Activated naive CD4-positive, alpha-beta T cell treated with anti-CD3 and anti-CD28 coated beads for 36 hours (primary cell): ENCODE measurements at regions of chr7 and their contacts with region 1.

Region 1: DNA sequence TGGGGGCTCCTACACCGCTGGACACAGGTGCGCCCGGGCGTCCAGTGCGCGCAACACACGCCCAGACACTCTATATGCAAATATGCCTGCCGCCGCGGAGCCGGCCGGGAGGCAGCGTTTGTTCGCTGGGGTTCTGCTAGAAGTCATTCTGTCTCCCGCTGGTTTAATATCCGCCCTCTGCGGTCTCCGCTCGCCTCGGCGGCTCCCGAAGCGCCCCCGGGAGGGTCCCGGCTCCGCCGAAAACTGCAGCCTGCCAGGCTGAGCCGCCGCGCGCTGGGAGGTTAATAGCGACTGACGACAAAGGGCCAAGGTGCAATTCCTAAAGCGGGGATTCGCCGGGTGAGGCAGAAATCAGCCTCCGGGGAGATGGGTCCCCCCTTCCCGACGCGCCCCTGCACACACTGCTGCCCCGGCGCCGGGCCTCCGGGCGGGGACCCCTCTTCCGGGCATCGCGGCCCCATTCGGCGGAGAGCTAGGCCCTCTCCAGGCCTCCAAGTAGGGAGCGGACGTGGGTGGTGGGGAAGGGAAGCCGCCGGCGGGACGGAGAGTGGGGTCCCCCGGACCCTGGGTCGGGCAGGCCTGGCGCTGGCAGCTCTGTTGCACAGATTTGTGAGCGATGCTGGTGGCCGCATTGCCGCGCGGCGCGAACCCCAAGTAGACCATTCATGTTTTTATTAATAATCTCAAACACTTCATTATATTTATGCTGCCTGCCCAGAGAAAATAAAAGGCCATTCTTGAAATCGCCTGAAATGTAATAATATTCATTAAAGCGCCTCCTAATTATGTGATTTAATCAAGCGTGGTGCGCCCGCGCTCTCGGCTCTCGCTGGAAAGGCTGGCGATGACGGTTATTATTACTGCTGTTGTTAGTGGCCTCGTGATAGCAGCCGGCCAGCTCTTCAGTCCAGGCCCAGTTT is 9.1 kb downstream of the EN2 start:
- DNase-seq: peak; percentile 61
- H3K4me3 Mint-ChIP-seq: no peak overlapping the region
- H3K27ac Mint-ChIP-seq: no peak overlapping the region
- H3K4me1 Mint-ChIP-seq: peaks cover 21% of the 10 kb centered on the region
- H3K27me3 Mint-ChIP-seq: peaks cover 80% of the 10 kb centered on the region

Region 2: GRCh38 chr7:155448632-155449007 is 18.5 kb before region 1 on chr7:
- CTCF ChIA-PET with region 1: no interaction called
- intact Hi-C with region 1: loop called (anchors 1 kb)
- DNase-seq: no peak
- H3K4me3 Mint-ChIP-seq: no peak overlapping the region
- H3K27ac Mint-ChIP-seq: no peak overlapping the region
- H3K4me1 Mint-ChIP-seq: peaks cover 10% of the 10 kb centered on the region
- H3K27me3 Mint-ChIP-seq: peaks cover 56% of the 10 kb centered on the region

Region 3: DNA sequence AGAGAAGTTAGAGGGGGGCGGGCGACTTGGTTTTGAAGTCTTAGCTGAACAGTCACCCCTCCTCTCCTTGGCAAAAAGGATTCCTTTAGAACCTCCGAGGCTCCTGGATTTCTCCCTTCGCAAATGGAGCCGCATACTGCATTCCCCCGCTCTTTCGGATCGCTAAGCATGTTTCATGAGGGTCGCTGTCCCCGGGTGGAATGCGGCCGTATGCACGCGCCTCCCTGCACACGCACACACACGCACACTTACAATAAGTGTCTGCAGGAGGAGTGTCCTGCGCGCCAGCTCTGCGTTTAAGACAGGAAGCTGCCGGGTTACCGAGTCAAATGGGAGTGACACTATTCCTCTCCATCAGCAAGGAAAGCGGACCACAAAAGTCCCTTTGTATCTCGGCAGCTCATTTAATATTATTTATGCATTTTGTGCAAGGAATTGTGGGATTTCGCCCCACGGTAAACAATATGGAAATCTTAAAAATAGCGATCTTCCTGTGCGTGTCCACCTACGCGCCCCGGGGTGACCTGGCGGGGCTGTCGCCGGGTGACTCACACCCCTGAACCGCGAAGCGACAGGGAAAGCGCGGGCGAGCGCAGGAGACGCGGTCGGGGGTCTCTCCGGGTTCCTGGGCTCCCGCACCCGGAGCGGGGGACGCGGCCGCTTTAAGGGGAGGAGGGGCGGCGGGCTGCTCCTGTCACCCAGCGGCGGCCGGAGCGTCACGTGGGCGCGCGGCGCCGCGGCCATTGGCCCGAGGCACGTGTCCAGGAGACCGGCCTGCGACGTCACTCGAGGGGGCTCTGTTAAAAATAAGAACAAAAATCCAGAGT is 10.1 kb before region 1 on chr7:
- CTCF ChIA-PET with region 1: no interaction called
- intact Hi-C with region 1: loop called (anchors 1 kb)
- DNase-seq: peak; percentile 45
- H3K4me3 Mint-ChIP-seq: peak overlapping the region; percentile 63
- H3K27ac Mint-ChIP-seq: peak overlapping the region; percentile 18
- H3K4me1 Mint-ChIP-seq: peaks cover 22% of the 10 kb centered on the region
- H3K27me3 Mint-ChIP-seq: peaks cover 75% of the 10 kb centered on the region

Region 4: DNA sequence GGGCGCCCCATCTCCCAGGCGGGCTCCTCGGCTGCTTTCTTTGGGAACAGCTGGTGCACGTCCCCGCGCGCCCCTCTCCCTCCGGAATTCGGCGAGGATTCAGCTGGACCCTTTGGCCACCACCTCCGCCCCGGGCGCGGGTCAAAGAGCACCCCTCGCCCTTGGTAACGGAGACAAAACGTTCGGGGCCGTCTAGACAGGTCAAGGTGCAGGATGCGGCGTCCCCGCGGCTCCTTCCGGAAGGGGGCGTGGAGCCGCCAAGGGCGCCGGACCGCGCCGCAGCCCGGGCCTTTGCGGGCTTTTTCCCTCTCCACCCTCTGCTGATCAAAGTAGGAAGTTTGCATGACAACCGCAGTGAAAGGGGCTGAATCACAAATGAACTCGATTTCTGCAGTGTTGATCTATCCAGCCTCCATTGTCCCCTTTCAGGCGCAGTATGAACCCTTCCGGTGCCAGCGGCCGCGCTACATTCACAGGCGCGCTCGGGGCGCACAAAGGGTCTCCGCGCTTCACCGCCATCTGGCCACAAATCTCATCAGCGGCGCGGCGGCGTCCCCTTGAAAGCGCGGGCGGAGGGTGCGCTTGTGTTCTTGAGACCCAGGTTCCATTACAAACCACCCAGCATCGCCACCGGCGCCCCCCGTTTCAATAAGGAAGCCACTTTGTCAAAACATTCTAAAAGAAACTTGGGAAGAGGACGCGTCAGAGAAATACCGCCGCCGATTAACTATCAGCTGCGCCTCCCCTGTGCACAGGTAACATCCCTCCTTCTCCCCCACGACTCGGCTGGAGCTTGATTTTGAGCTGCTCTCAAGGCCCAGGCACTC is 42.9 kb after region 1 on chr7:
- CTCF ChIA-PET with region 1: interaction called, 4 read pairs
- intact Hi-C with region 1: loop called (anchors 2 kb)
- DNase-seq: no peak
- H3K4me3 Mint-ChIP-seq: peak overlapping the region; percentile 54
- H3K27ac Mint-ChIP-seq: no peak overlapping the region
- H3K4me1 Mint-ChIP-seq: peaks cover 18% of the 10 kb centered on the region
- H3K27me3 Mint-ChIP-seq: peaks cover 73% of the 10 kb centered on the region

Region 5: DNA sequence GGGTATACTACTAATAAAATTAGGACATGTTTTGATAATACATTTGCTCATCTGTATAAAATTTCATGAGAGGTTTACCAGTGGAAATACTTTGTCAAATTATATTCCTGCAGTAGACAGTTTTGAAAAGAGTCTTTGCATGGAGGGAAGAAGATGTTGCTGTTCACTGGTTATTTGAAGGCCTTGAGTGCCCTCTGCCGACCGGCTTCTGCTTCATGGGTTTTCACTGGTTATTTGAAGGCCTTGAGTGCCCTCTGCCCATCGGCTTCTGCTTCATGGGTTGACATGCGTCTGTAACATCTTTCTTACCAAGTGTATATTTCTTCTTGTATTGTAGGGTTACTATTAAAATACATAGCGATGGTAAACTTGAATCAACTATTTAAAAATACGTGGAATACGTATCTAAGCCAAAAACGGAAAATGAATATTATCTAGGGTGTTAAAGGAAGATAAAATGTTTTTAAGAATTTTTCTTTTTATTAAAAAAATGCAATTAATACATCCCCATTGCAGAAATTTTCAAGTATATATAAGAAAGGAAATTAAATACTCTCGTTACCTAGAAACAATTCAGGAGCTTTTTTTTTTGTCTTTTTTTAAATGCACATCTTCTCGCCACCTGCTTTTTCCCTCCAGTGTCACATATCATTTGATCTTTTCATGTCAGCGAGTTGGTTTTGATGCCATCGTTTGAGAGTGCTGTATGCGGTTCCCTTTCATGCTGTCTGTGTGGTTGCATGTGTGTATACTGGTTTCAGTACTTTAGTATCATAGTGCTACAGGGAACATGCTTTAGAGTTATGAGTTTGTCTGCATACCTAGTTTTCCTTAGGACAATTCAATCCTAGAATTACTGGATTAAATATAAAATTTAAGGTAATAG is 271.8 kb after region 1 on chr7:
- CTCF ChIA-PET with region 1: interaction called, 3 read pairs
- intact Hi-C with region 1: loop called (anchors 10 kb)
- DNase-seq: peak; percentile 87
- H3K4me3 Mint-ChIP-seq: no peak overlapping the region
- H3K27ac Mint-ChIP-seq: no peak overlapping the region
- H3K4me1 Mint-ChIP-seq: peaks cover 47% of the 10 kb centered on the region
- H3K27me3 Mint-ChIP-seq: no peaks in the 10 kb centered on the region

Region 6: GRCh38 chr7:155787171-155787851 is 320.2 kb after region 1 on chr7:
- CTCF ChIA-PET with region 1: no interaction called
- intact Hi-C with region 1: no loop called
- DNase-seq: no peak
- H3K4me3 Mint-ChIP-seq: no peak overlapping the region
- H3K27ac Mint-ChIP-seq: no peak overlapping the region
- H3K4me1 Mint-ChIP-seq: peaks cover 9% of the 10 kb centered on the region
- H3K27me3 Mint-ChIP-seq: peaks cover 12% of the 10 kb centered on the region

Region 7: DNA sequence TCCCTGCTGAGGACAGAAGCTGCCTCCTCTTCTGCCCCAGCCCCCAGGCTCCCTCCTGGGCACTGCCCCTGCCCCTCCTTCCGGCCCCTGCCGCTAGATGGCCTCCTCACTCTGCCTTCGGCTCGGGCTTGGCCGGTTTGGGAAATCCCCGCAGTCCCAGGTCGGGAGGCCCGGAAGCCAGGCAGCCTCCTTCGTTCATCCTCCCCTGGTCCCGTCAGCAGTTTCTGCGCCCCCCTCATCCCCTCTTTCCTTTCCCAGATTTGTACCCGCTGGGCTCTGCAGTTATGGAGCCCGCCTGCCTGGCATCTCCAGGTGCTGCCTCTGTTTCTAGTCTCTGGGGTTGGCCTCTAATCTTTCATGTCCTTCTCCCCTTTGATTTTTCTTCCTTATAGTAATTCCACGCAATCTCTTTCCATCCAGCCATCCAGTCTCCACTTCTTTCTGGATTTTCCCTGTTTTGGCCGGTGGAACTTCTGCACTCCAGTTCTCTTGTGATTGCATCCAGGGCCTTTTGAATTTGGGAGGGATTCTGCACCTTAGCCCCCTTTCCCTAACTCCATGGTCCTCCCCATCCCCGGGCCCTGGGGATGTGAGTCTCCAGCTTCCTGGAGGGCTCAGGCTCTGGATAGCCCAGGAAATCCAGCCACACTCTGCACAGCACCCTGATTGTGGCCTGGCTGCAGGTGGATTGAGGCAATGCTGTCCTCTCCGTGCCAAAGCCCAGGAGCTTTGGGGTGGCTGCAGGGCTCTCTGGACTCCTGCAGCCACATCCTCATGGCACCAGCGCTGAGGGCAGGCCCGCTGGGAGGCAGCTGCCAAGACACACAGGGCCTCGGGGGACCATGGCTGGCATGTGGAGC is 348.5 kb after region 1 on chr7:
- CTCF ChIA-PET with region 1: no interaction called
- intact Hi-C with region 1: loop called (anchors 5 kb)
- DNase-seq: peak; percentile 87
- H3K4me3 Mint-ChIP-seq: no peak overlapping the region
- H3K27ac Mint-ChIP-seq: no peak overlapping the region
- H3K4me1 Mint-ChIP-seq: peaks cover 17% of the 10 kb centered on the region
- H3K27me3 Mint-ChIP-seq: peaks cover 41% of the 10 kb centered on the region

Region 8: GRCh38 chr7:157010588-157011332 is 1543.7 kb after region 1 on chr7 and contains the start of gene MNX1:
- CTCF ChIA-PET with region 1: no interaction called
- intact Hi-C with region 1: loop called (anchors 5 kb)
- DNase-seq: peak; percentile 51
- H3K4me3 Mint-ChIP-seq: peak within 1 kb of the TSS; percentile 46
- H3K27ac Mint-ChIP-seq: no peak within 1 kb of the TSS
- H3K4me1 Mint-ChIP-seq: peaks cover 12% of the 10 kb centered on the region
- H3K27me3 Mint-ChIP-seq: peaks cover 82% of the 10 kb centered on the region
- total RNA-seq, gene MNX1: 0.10 TPM in 1 of 2 experiments, not detected in the other